Endothelial cell of umbilical vein (primary cell): ENCODE measurements at regions of chr12 and their contacts with region 1.

Region 1: DNA sequence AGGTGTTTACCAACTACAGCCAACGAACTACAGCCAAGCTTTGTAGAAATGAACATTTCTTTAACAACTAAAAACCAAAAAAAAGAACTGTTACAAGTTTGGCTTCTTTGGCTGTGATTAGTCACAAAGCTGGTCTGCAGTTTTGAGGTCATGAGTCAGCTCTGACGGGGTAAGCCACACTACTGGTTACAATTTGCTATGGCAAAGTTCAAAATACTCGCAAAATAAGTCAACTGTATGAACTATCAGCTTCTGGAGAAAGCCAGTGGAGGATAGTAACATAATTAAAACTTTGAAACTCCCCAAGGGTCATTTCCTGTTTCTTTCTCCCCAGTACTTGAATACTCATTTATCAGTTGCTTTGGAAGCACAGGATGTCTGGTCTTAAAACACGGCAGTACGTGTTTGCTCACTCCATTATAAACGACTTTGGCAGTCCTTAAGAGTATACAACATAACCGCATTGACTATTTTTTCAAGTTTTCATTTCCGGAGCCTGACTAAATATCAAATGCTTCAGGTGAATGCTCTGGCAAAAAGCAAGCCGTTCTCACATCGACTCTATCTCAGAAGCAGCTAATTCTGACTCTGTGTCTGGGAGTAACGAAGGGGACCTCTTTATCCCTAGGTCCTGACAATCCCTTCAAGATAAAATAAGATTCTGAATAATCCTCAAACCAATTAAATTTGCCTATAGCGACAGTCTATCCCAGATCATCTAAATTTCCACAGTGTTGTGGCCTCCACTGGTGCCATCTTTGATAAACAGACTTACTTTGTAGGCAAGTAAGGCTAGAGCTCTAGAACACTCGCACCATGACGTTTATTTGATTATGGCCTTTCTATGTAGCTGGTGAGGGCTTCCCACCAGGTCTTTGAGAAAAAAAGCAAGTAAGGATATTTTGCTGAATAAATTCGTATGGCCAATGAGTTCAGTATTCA is 10.6 kb downstream of the PHLDA1 start:
- DNase-seq: peak; percentile 94
- H3K4me3 ChIP-seq: no peak overlapping the region
- H3K27ac ChIP-seq: peak overlapping the region; percentile 82
- H3K4me1 ChIP-seq: peaks cover 35% of the 10 kb centered on the region
- H3K27me3 ChIP-seq: no peaks in the 10 kb centered on the region
- CTCF ChIP-seq: no peak
- POLR2A ChIP-seq: peak; percentile 33

Region 2: DNA sequence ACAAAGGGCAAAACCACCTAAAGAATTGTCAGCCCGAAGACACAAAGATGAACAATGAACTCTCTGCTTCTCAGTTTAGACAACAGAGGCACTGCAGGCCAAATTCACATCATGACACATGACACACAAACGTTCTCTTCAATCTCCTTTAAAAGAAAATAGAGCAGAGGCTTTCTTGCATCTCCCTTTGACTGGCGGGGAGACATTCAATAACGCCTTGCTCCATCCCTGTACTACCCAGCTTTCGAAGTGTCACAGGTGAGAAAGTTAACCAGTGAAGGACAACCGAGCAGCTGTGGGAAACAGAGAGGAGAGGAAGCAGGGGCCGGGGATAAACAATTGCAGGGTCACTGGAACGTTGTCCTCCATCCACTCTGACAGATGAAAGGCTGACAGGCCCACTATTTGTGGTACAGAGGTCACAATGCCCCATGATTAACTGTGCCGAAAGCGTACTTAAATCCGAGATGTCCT is 120.2 kb before region 1 on chr12:
- CTCF ChIA-PET with region 1: no interaction called
- POLR2A ChIA-PET with region 1: no interaction called
- dilution Hi-C with region 1: no loop called
- intact Hi-C with region 1: no loop called
- DNase-seq: no peak
- H3K4me3 ChIP-seq: no peak overlapping the region
- H3K27ac ChIP-seq: no peak overlapping the region
- H3K4me1 ChIP-seq: no peaks in the 10 kb centered on the region
- H3K27me3 ChIP-seq: no peaks in the 10 kb centered on the region
- CTCF ChIP-seq: no peak
- POLR2A ChIP-seq: no peak

Region 3: DNA sequence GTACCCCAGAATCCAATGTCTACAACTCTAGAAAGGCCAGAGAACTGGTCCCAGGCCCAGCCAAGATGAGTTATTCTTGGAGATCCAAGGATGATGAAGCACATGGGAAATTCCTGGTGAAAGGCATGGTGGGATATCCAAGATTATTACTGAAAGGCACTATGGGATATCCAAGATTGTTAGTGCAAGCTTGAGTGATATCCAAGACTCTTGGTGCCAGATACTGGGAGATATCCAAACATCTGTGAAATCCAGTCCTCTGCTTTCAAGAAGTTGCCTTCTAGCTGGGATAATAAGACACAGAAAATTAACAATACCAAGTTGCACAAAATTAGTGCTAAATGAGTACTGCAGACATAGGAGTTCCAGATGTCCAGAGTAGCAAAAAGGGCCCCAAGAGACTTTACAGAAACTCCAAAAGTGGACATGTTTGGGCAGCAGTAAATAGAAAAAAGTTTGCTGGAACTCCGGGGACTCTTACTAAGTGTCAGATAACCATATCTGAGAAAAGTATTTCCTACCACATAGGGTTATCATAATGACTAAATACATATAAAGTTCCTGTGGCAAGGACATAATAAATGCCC is 24.0 kb before region 1 on chr12:
- CTCF ChIA-PET with region 1: interaction called, 3 read pairs
- POLR2A ChIA-PET with region 1: no interaction called
- dilution Hi-C with region 1: no loop called
- intact Hi-C with region 1: loop called (anchors 2 kb)
- DNase-seq: peak; percentile 50
- H3K4me3 ChIP-seq: no peak overlapping the region
- H3K27ac ChIP-seq: peak overlapping the region; percentile 67
- H3K4me1 ChIP-seq: peaks cover 31% of the 10 kb centered on the region
- H3K27me3 ChIP-seq: no peaks in the 10 kb centered on the region
- CTCF ChIP-seq: no peak
- POLR2A ChIP-seq: no peak

Region 4: GRCh38 chr12:76337583-76337982 is 316.6 kb after region 1 on chr12:
- CTCF ChIA-PET with region 1: no interaction called
- POLR2A ChIA-PET with region 1: no interaction called
- dilution Hi-C with region 1: no loop called
- intact Hi-C with region 1: no loop called
- DNase-seq: peak; percentile 52
- H3K4me3 ChIP-seq: no peak overlapping the region
- H3K27ac ChIP-seq: peak overlapping the region; percentile 55
- H3K4me1 ChIP-seq: peaks cover 28% of the 10 kb centered on the region
- H3K27me3 ChIP-seq: no peaks in the 10 kb centered on the region
- CTCF ChIP-seq: no peak
- POLR2A ChIP-seq: no peak